Activated CD8-positive, alpha-beta T cell treated with anti-CD3 and anti-CD28 coated beads for 36 hours (primary cell): ENCODE measurements at regions of chr19 and their contacts with region 1.

Region 1: DNA sequence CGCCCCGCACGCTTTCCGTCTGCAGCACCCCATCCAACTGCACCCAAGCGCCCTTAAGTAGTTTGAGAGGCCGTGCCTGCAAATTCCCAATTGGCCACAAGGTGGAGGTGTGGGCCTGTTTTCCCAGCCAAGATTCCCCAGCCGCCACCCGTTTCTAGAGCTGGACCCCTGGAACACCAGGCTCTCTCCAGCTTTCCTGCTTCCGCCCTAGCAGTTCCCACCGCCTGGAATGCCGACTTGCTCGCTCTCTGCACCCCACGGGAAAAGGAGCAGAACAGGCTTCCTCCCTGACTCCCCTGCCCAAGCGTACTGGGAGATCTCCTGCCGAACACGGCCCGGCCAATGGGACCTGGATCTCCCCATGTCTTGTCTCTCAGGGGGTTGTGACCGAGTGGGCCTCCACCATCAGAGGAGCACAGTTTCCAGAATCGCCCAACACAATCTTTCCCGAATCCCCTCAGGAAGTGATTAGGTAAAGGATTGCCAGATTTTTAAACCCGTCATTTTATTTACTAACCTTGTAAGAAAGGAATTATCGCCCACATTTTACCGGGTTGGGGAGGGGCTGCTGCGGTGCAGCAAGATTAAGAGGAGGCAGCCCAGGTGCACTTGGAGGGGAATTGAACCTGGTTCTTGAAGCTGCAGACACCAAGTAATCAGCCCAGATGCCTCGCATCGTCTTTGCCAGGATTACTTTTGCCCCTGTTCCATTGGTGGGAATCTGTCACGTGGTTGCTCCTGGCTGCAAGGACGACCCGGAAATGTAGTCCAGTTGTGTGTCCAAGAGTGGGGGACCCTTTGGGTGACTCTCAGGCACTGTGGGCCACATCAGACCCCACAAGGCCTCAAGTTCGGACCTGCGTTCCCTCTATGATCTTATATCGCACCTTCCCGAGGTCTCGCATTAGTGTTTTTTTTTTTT is 3.5 kb upstream of the NAPSA start:
- DNase-seq: peak; percentile 88
- ATAC-seq: peak; percentile 66
- H3K4me3 Mint-ChIP-seq: peak overlapping the region; percentile 87
- H3K27ac Mint-ChIP-seq: peak overlapping the region; percentile 81
- H3K4me1 Mint-ChIP-seq: peaks cover 37% of the 10 kb centered on the region
- H3K27me3 Mint-ChIP-seq: no peaks in the 10 kb centered on the region
- CTCF ChIP-seq: peak; percentile 90

Region 2: GRCh38 chr19:50383852-50384684 is 15.2 kb after region 1 on chr19 and contains the start of gene POLD1:
- CTCF ChIA-PET with region 1: interaction called, 10 read pairs
- POLR2A ChIA-PET with region 1: interaction called, 4 read pairs
- intact Hi-C with region 1: no loop called
- DNase-seq: peak; percentile 99
- ATAC-seq: peak; percentile 95
- H3K4me3 Mint-ChIP-seq: peak within 1 kb of the TSS; percentile 94
- H3K27ac Mint-ChIP-seq: peak within 1 kb of the TSS; percentile 95
- H3K4me1 Mint-ChIP-seq: peaks cover 32% of the 10 kb centered on the region
- H3K27me3 Mint-ChIP-seq: no peaks in the 10 kb centered on the region
- CTCF ChIP-seq: no peak
- total RNA-seq, gene POLD1: 214 to 215 TPM

Region 3: GRCh38 chr19:50414864-50415660 is 46.2 kb after region 1 on chr19:
- CTCF ChIA-PET with region 1: interaction called, 4 read pairs
- POLR2A ChIA-PET with region 1: interaction called, 3 read pairs
- intact Hi-C with region 1: loop called (anchors 10 kb)
- DNase-seq: peak; percentile 83
- ATAC-seq: peak; percentile 78
- H3K4me3 Mint-ChIP-seq: no peak overlapping the region
- H3K27ac Mint-ChIP-seq: no peak overlapping the region
- H3K4me1 Mint-ChIP-seq: peaks cover 13% of the 10 kb centered on the region
- H3K27me3 Mint-ChIP-seq: peaks cover 10% of the 10 kb centered on the region
- CTCF ChIP-seq: peak; percentile 79

Region 4: DNA sequence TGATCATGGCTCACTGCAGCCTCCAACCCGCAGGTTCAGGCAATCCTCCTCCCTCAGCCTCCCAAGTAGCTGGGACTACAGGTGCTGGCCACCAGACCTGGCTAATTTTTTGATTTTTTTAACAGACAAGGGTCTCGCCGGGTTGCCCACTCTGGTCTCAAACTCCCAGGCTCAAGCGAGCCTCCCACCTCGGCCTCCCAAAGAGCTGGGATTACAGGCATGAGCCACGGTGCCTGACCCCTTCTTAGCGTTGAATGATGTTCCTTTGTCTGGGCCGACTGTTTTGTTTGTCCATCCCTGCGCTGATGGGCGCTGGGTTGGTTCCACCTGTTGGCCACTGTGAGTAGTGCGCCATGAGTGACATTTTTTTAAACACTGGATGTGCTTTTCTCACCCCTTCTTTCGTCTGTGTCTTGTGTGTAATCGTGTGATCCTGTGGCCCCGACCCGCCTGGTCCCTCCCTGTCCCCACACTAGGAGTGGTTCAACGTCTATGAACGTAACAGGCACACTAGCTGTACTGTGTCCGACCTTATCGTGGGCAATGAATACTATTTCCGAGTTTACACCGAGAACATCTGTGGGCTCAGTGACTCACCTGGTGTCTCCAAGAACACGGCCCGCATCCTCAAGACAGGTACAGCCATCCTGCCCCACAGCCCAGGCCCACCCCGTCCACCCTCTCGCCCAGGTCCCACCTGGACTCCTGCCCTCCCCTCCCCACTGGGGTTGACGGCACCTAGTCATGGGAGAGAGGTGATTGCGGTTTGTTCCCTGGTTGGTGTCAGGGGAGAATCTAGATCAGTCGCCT is 92.4 kb after region 1 on chr19:
- CTCF ChIA-PET with region 1: interaction called, 17 read pairs
- POLR2A ChIA-PET with region 1: no interaction called
- intact Hi-C with region 1: no loop called
- DNase-seq: peak; percentile 80
- ATAC-seq: peak; percentile 88
- H3K4me3 Mint-ChIP-seq: no peak overlapping the region
- H3K27ac Mint-ChIP-seq: no peak overlapping the region
- H3K4me1 Mint-ChIP-seq: peaks cover 15% of the 10 kb centered on the region
- H3K27me3 Mint-ChIP-seq: peaks cover 28% of the 10 kb centered on the region
- CTCF ChIP-seq: peak; percentile 86